ENCODE measurements at regions of chr12 and their contacts with region 1.

Region 1: GRCh38 chr12:46382964-46383653 is 10.5 kb upstream of the SLC38A2 start:
- DNase-seq: peak; percentile 96
- H3K4me3 Mint-ChIP-seq: peak overlapping the region; percentile 77
- H3K27ac Mint-ChIP-seq: peak overlapping the region; percentile 87
- H3K4me1 Mint-ChIP-seq: peaks cover 38% of the 10 kb centered on the region
- H3K27me3 Mint-ChIP-seq: no peaks in the 10 kb centered on the region

Region 2: GRCh38 chr12:46364777-46365580 is 18.1 kb before region 1 on chr12:
- CTCF ChIA-PET with region 1: interaction called, 3 read pairs
- intact Hi-C with region 1: loop called (anchors 2 kb)
- DNase-seq: peak; percentile 45
- H3K4me3 Mint-ChIP-seq: no peak overlapping the region
- H3K27ac Mint-ChIP-seq: peak overlapping the region; percentile 73
- H3K4me1 Mint-ChIP-seq: peaks cover 76% of the 10 kb centered on the region
- H3K27me3 Mint-ChIP-seq: no peaks in the 10 kb centered on the region

Region 3: DNA sequence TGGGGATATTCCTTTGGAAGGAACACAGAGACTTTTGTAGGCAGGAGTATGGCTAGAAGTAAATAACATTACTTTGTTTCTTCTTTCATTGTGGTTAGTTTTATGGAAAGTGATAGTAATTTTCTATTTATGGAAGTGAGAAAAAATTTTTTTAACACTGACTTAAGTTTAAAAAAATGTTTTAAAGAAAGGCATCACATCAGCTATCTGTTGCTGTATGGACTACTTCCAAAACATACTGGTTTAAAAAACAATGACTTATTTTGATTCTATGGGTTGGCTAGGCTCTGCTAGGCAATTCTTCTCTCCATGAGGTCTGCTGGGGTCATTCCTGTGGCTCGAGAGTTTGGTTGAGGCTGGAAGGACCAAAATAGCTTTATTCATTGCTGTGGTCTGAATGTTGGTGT is 21.1 kb after region 1 on chr12:
- CTCF ChIA-PET with region 1: no interaction called
- intact Hi-C with region 1: loop called (anchors 2 kb)
- DNase-seq: no peak
- H3K4me3 Mint-ChIP-seq: no peak overlapping the region
- H3K27ac Mint-ChIP-seq: no peak overlapping the region
- H3K4me1 Mint-ChIP-seq: peaks cover 54% of the 10 kb centered on the region
- H3K27me3 Mint-ChIP-seq: no peaks in the 10 kb centered on the region

Measured in activated naive CD4-positive, alpha-beta T cell treated with anti-CD3 and anti-CD28 coated beads for 36 hours (primary cell).